CD4-positive, alpha-beta T cell (primary cell): ENCODE measurements at regions of chr20 and their contacts with region 1.

Region 1: DNA sequence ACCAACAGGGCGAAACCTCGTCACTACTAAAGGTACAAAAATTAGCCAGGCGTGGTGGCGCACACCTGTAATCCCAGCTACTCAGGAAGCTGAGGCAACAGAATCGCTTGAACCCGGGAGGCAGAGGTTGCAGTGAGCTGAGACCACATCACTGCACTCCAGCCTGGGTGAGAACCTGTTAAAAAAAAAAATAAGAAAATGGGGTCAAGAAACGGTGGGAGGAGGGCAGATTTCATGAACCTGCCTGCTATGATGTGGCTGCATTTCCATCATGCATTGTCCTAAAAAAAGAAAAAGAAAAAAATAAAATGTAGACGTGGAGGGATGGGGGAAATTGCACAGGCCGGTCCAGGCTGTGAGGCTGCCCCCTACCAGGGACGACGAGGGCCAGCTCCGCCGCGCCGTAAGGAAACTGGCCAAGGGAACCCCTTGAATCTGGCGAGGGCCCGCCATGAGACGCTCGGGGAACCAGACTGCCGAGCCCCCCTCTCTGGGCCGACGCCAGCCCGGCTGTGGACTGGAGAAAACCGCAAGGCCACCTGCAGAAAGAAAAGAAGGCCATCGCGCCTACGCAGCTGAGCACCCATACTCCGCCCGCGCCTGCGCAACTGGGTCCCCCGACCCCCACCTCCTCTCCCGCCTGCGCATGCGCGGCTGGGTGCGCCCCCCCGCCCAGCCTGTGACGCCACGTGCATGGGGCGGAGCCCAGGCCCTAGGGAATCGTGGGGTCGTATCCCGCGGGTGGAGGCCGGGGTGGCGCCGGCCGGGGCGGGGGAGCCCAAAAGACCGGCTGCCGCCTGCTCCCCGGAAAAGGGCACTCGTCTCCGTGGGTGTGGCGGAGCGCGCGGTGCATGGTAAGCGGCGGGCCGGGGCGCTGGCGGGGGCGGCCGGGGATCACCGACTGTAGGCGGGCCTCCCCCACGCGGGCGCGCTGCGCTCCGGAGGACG is at the start of gene ENTPD6:
- DNase-seq: peak; percentile 88 to 96 (median 93)
- ATAC-seq: peak; percentile 82
- H3K4me3 ChIP-seq: peak within 1 kb of the TSS; percentile 97
- H3K4me3 Mint-ChIP-seq: peak within 1 kb of the TSS; percentile 89
- H3K27ac ChIP-seq: peak within 1 kb of the TSS; percentile 75 to 83
- H3K27ac Mint-ChIP-seq: peak within 1 kb of the TSS; percentile 93
- H3K4me1 ChIP-seq: peaks cover 42% of the 10 kb centered on the region
- H3K4me1 Mint-ChIP-seq: peaks cover 49% of the 10 kb centered on the region
- H3K27me3 ChIP-seq: no peaks in the 10 kb centered on the region
- H3K27me3 Mint-ChIP-seq: no peaks in the 10 kb centered on the region
- CTCF ChIP-seq: no peak
- total RNA-seq, gene ENTPD6: 78.5 to 85.1 TPM

Region 2: GRCh38 chr20:23357767-23358591 is 1837.3 kb before region 1 on chr20:
- CTCF ChIA-PET with region 1: no interaction called
- POLR2A ChIA-PET with region 1: no interaction called
- intact Hi-C with region 1: loop called in 1 of 2 experiments (anchors 5 kb)
- DNase-seq: peak; percentile 98 to 100 (median 100)
- ATAC-seq: peak; percentile 69
- H3K4me3 ChIP-seq: peak overlapping the region; percentile 93
- H3K4me3 Mint-ChIP-seq: peak overlapping the region; percentile 88
- H3K27ac ChIP-seq: peak overlapping the region; percentile 91 to 95
- H3K27ac Mint-ChIP-seq: peak overlapping the region; percentile 99
- H3K4me1 ChIP-seq: peaks cover 28% of the 10 kb centered on the region
- H3K4me1 Mint-ChIP-seq: peaks cover 35% of the 10 kb centered on the region
- H3K27me3 ChIP-seq: no peaks in the 10 kb centered on the region
- H3K27me3 Mint-ChIP-seq: no peaks in the 10 kb centered on the region
- CTCF ChIP-seq: no peak

Region 3: GRCh38 chr20:25057234-25058050 is 137.8 kb before region 1 on chr20:
- CTCF ChIA-PET with region 1: interaction called, 3 read pairs
- POLR2A ChIA-PET with region 1: interaction called, 34 read pairs
- intact Hi-C with region 1: loop called in 1 of 2 experiments (anchors 5 kb)
- DNase-seq: peak; percentile 45 to 94 (median 71)
- ATAC-seq: peak; percentile 45
- H3K4me3 ChIP-seq: peak overlapping the region; percentile 94
- H3K4me3 Mint-ChIP-seq: peak overlapping the region; percentile 88
- H3K27ac ChIP-seq: peak overlapping the region; percentile 86 to 89
- H3K27ac Mint-ChIP-seq: peak overlapping the region; percentile 88
- H3K4me1 ChIP-seq: peaks cover 55% of the 10 kb centered on the region
- H3K4me1 Mint-ChIP-seq: peaks cover 63% of the 10 kb centered on the region
- H3K27me3 ChIP-seq: no peaks in the 10 kb centered on the region
- H3K27me3 Mint-ChIP-seq: no peaks in the 10 kb centered on the region
- CTCF ChIP-seq: no peak

Region 4: DNA sequence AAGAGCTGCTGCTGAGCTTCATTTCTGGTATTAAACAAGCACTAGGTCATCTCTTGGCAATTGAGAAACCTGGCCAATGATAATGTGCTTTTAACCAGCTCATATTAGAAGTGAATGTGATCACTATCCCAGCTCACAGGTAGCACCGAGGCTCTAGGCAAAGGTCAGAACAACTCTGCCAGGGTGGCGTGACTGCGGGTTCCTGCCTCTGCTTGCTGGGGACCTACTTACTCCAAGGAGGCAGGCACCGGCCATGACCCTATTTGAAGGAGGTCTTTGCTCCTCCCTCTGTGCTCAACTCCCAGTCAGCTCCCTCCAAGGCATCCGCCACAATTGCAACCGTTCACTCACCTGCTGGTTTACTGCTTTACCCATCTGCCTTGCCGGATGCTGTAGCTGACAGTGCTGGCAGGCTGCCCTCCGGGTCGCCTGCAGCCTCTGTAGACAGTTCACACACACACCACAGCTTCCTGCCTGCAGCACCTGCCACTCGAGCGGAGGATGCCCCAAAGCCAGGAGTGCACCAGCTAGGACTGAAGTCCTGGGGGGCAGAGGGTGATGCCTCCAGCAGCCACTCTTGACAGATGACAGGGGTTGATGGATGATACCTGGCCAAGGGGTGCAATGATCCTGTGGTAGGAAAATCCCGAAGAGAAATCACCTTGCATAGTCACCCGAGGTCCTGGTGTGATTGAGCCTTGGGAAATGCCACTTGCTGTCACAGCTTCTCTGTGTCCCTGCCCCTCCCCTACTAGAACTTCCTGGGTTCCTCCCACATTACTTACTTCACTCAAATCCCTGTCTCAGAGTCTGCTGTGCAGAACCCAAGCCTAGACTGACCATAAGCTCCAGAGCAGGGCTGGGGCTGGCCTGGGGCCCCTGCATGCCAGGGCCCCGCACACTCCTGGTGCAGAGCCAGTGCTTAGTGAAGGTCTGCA is 104.5 kb before region 1 on chr20:
- CTCF ChIA-PET with region 1: no interaction called
- POLR2A ChIA-PET with region 1: interaction called, 22 read pairs
- intact Hi-C with region 1: no loop called
- DNase-seq: peak in 13 of 14 experiments; percentile 40 to 92 (median 78)
- ATAC-seq: peak; percentile 98
- H3K4me3 ChIP-seq: peak overlapping the region; percentile 19
- H3K4me3 Mint-ChIP-seq: peak overlapping the region; percentile 55
- H3K27ac ChIP-seq: peak overlapping the region; percentile 25 to 42
- H3K27ac Mint-ChIP-seq: peak overlapping the region; percentile 76
- H3K4me1 ChIP-seq: peaks cover 30% of the 10 kb centered on the region
- H3K4me1 Mint-ChIP-seq: peaks cover 38% of the 10 kb centered on the region
- H3K27me3 ChIP-seq: peaks cover 0 to 4% of the 10 kb centered on the region in 2 experiments
- H3K27me3 Mint-ChIP-seq: peaks cover 9% of the 10 kb centered on the region
- CTCF ChIP-seq: no peak

Region 5: DNA sequence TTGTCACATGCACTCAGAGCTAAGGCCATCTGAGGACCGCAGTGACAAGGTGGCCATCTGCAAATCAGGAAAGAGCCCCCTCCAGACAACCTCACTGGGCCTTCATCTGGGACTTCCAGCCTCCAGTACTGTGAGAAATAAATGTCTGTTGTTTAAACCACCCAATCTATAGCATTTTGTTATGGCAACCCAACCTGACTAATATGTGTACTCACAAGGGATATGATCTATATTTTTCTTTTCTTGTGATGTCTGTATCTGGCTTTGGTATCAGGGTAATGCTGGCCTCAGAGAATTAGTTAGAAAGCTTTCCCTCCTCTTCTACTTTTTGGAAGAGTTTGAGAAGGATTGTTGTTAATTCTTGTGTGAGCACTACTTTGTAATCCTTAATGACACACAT is 37.2 kb before region 1 on chr20:
- CTCF ChIA-PET with region 1: no interaction called
- POLR2A ChIA-PET with region 1: no interaction called
- intact Hi-C with region 1: no loop called
- DNase-seq: no peak
- ATAC-seq: no peak
- H3K4me3 ChIP-seq: no peak overlapping the region
- H3K4me3 Mint-ChIP-seq: no peak overlapping the region
- H3K27ac ChIP-seq: no peak overlapping the region
- H3K27ac Mint-ChIP-seq: no peak overlapping the region
- H3K4me1 ChIP-seq: no peaks in the 10 kb centered on the region
- H3K4me1 Mint-ChIP-seq: no peaks in the 10 kb centered on the region
- H3K27me3 ChIP-seq: no peaks in the 10 kb centered on the region
- H3K27me3 Mint-ChIP-seq: peaks cover 5% of the 10 kb centered on the region
- CTCF ChIP-seq: no peak

Region 6: DNA sequence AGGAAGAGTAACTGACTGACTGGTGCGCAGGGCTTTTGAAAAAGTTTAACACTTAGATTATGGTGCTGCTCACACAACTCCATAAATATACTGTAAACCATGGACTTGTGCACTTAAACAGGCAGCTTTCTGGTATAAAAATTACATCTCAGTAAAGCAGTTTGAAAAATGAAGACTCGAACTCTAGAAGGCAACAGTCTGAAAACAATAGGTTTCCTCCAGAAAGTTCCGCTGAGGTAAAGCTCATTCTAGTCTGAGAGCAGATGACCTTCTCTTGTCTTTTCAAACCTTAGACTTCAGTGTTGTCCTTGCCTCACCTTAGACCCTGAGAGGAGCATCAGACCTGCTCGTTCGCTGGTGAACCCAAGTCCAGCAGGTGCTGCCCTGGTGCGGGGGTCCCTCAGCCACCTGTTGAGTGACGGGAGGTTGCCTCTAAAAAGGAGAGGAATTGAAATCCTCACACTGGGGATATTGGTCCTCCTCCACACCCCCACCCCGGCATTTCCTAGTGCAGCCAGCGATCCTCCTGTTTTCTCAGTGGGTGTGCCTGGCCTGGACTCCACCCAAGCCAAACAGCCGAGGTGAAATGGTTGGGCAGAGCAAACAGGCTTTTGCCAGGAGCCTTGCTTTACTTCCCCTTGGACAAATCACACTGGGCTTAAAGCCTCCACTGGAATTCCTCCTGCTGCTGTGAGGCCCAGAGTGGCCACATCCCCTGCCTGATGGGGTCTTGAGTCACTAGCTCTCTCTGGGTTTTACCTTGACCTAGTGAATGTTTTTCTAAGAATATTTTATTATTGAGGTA is 37.9 kb after region 1 on chr20:
- CTCF ChIA-PET with region 1: no interaction called
- POLR2A ChIA-PET with region 1: no interaction called
- intact Hi-C with region 1: no loop called
- DNase-seq: no peak
- ATAC-seq: no peak
- H3K4me3 ChIP-seq: no peak overlapping the region
- H3K4me3 Mint-ChIP-seq: no peak overlapping the region
- H3K27ac ChIP-seq: no peak overlapping the region
- H3K27ac Mint-ChIP-seq: no peak overlapping the region
- H3K4me1 ChIP-seq: no peaks in the 10 kb centered on the region
- H3K4me1 Mint-ChIP-seq: no peaks in the 10 kb centered on the region
- H3K27me3 ChIP-seq: peaks cover 6 to 10% of the 10 kb centered on the region in 2 experiments
- H3K27me3 Mint-ChIP-seq: peaks cover 19% of the 10 kb centered on the region
- CTCF ChIP-seq: no peak

Region 7: DNA sequence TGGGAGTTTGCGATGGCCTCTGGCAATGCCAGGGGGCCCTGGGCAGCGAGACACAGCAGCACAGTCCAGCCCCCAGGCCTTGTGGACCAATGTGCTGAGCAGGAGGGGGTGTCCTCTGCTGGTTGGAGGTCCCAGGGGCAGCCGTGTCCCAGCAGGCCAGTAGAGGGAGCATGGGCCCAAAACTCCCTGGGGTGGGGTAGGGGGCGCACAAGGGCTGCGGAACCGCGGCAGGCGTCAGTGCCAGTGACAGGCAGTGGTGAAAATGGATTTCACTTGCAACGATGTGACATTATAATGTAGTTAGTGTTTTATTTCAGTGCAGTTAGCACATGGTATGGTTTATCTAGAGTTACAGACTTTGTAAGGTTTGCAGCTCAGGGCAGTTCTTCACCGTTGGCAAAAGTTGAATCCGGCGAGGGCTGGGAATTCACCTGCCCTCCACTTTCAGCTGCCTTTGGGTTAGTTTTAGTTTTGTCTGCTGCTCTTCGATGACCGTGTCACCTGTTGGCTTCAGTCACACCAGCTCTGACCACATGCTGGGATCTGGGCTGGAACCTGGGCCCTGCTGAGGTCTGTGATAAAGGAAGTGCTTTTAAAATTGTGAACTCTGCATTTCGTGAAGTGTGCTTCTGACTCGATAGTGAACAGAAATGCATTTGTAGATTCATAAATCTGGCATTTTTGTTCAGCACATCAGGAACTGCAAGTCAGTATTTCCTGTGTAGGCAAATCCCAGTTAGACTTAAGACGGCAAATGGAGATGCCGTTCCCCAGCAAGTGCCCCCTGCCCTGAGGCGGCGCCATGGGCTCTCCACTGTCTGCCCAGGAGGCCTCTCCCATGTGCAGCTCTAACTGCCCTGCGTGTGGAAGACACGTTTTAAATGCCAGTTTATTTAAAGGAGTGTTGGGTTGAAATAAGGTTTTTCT is 99.4 kb after region 1 on chr20:
- CTCF ChIA-PET with region 1: no interaction called
- POLR2A ChIA-PET with region 1: interaction called, 3 read pairs
- intact Hi-C with region 1: loop called in 1 of 2 experiments (anchors 10 kb)
- DNase-seq: peak; percentile 37 to 79 (median 59)
- ATAC-seq: peak; percentile 84
- H3K4me3 ChIP-seq: no peak overlapping the region
- H3K4me3 Mint-ChIP-seq: no peak overlapping the region
- H3K27ac ChIP-seq: no peak overlapping the region
- H3K27ac Mint-ChIP-seq: peak overlapping the region; percentile 39
- H3K4me1 ChIP-seq: peaks cover 5% of the 10 kb centered on the region
- H3K4me1 Mint-ChIP-seq: no peaks in the 10 kb centered on the region
- H3K27me3 ChIP-seq: no peaks in the 10 kb centered on the region
- H3K27me3 Mint-ChIP-seq: no peaks in the 10 kb centered on the region
- CTCF ChIP-seq: peak; percentile 83

Region 8: GRCh38 chr20:25399037-25399430 is 203.7 kb after region 1 on chr20:
- CTCF ChIA-PET with region 1: no interaction called
- POLR2A ChIA-PET with region 1: interaction called, 3 read pairs
- intact Hi-C with region 1: loop called in 1 of 2 experiments (anchors 5 kb)
- DNase-seq: peak in 4 of 14 experiments; percentile 20 to 72 (median 67)
- ATAC-seq: no peak
- H3K4me3 ChIP-seq: no peak overlapping the region
- H3K4me3 Mint-ChIP-seq: no peak overlapping the region
- H3K27ac ChIP-seq: no peak overlapping the region
- H3K27ac Mint-ChIP-seq: no peak overlapping the region
- H3K4me1 ChIP-seq: no peaks in the 10 kb centered on the region
- H3K4me1 Mint-ChIP-seq: no peaks in the 10 kb centered on the region
- H3K27me3 ChIP-seq: no peaks in the 10 kb centered on the region
- H3K27me3 Mint-ChIP-seq: peaks cover 9% of the 10 kb centered on the region
- CTCF ChIP-seq: peak; percentile 66

Region 9: GRCh38 chr20:25696384-25697131 is 501.3 kb after region 1 on chr20 and contains the start of gene ZNF337:
- CTCF ChIA-PET with region 1: no interaction called
- POLR2A ChIA-PET with region 1: no interaction called
- intact Hi-C with region 1: loop called in 1 of 2 experiments (anchors 5 kb)
- DNase-seq: peak; percentile 85 to 96 (median 90)
- ATAC-seq: peak; percentile 97
- H3K4me3 ChIP-seq: peak within 1 kb of the TSS; percentile 85
- H3K4me3 Mint-ChIP-seq: peak within 1 kb of the TSS; percentile 94
- H3K27ac ChIP-seq: peak within 1 kb of the TSS; percentile 42 to 82
- H3K27ac Mint-ChIP-seq: peak within 1 kb of the TSS; percentile 88
- H3K4me1 ChIP-seq: peaks cover 13% of the 10 kb centered on the region
- H3K4me1 Mint-ChIP-seq: peaks cover 59% of the 10 kb centered on the region
- H3K27me3 ChIP-seq: no peaks in the 10 kb centered on the region
- H3K27me3 Mint-ChIP-seq: no peaks in the 10 kb centered on the region
- CTCF ChIP-seq: no peak
- total RNA-seq, gene ZNF337: 17.9 to 18.1 TPM